ENCODE measurements at regions of chr4 and their contacts with region 1.

Region 1: DNA sequence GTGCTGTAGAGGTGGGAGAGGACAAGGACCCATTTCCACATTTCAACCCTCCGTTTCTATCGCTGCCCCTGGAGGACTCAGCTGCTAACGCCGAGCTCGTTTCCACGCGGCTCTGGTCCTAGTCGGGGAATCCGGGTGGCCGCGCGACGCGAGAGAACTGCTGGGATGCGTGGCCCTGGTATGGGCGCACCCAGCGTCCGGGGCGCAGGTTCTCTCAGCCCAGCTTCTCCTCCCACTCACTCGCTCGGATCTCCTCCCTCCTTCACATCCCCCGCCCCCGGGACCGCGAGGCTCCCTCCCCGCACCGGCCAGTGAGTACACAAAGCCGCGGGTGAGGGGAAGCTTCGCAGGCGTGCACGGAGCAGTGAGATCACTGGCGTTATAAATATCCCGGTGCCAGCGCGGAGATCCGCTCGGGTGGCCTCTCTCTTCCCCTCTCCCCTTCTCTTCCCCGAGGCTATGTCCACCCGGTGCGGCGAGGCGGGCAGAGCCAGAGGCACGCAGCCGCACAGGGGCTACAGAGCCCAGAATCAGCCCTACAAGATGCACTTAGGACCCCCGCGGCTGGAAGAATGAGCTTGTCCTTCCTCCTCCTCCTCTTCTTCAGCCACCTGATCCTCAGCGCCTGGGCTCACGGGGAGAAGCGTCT is at the start of gene FGF5:
- DNase-seq: peak; percentile 94
- ATAC-seq: peak; percentile 87
- H3K4me3 ChIP-seq: peak within 1 kb of the TSS; percentile 63
- H3K27ac ChIP-seq: peak within 1 kb of the TSS; percentile 87
- H3K4me1 ChIP-seq: peaks cover 7% of the 10 kb centered on the region
- H3K27me3 ChIP-seq: no peaks in the 10 kb centered on the region
- CTCF ChIP-seq: no peak
- POLR2A ChIP-seq: peak; percentile 93
- RAD21 ChIP-seq: no peak
- total RNA-seq, gene FGF5: 18.6 and 35.8 TPM in 2 replicates

Region 2: DNA sequence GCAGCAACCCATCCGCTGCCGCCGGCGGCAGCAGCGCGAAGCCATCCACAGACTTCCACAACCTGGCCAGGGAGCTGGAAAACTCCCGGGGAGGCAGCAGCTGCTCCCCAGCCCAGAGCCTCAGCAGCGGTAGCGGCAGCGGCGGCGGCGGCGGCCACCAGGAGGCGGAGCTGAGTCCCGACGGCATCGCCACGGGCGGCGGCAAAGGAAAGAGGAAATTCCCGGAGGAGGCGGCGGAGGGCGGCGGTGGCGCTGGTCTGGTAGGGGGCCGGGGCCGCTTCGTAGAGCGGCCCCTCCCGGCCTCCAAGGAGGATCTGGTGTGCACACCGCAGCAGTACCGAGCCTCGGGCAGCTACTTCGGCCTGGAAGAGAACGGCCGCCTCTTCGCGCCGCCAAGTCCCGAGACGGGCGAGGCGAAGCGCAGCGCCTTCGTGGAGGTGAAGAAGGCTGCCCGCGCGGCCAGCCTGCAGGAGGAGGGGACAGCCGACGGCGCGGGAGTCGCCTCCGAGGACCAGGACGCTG is 64.1 kb before region 1 on chr4:
- CTCF ChIA-PET with region 1: interaction called, 4 read pairs
- POLR2A ChIA-PET with region 1: interaction called, 3 read pairs
- dilution Hi-C with region 1: no loop called
- in situ Hi-C with region 1: no loop called
- intact Hi-C with region 1: loop called (anchors 5 kb)
- DNase-seq: peak; percentile 80
- ATAC-seq: peak; percentile 75
- H3K4me3 ChIP-seq: peak overlapping the region; percentile 66
- H3K27ac ChIP-seq: peak overlapping the region; percentile 89
- H3K4me1 ChIP-seq: peaks cover 2% of the 10 kb centered on the region; the same call in 1 of the 2 replicates
- H3K27me3 ChIP-seq: no peaks in the 10 kb centered on the region
- CTCF ChIP-seq: peak; percentile 76
- POLR2A ChIP-seq: no peak
- RAD21 ChIP-seq: peak; percentile 56

Region 3: DNA sequence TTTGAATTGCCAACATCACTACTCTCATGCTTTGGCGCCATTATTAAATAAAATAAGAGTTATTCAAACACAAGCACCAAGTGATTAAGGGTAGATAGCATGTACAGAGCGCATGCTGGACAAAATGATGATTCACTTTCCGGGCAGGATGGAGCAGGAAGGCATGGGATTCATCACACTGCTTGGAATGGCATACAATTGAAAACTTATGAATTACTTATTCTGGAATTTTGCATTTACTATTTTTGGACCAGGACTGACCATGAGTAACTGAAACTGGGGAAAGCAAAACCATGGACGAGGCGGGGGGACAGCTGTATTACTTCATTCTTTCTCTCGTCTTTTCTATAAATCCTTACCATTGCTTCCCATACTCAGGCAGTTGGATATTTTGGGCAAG is 28.4 kb before region 1 on chr4:
- CTCF ChIA-PET with region 1: interaction called, 8 read pairs
- POLR2A ChIA-PET with region 1: interaction called, 9 read pairs
- dilution Hi-C with region 1: no loop called
- in situ Hi-C with region 1: no loop called
- intact Hi-C with region 1: loop called (anchors 1 kb)
- DNase-seq: peak; percentile 96
- ATAC-seq: peak; percentile 83
- H3K4me3 ChIP-seq: peak overlapping the region; percentile 23; the same call in 1 of the 2 replicates
- H3K27ac ChIP-seq: peak overlapping the region; percentile 25; the same call in 1 of the 2 replicates
- H3K4me1 ChIP-seq: peaks cover 26% of the 10 kb centered on the region
- H3K27me3 ChIP-seq: no peaks in the 10 kb centered on the region
- CTCF ChIP-seq: no peak
- POLR2A ChIP-seq: no peak
- RAD21 ChIP-seq: no peak

Region 4: DNA sequence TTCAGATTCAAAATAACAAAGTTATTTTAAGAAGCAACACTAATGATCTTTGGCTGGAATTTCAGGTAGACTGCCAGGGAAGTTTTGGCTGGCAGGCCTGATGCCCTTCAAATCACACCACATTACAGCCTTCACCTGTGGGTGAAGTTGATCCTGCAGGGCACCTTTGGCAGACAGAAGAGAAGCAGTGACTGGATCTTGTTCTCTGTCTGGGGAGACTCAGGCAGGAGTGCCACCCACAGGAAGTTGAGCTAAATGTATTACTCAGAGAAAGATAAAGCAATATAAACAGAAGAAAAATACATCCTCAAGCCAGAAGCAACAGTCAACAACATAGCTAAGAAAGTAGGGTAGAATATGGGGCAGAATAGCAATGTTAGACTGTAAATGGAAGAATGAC is 56.3 kb after region 1 on chr4:
- CTCF ChIA-PET with region 1: interaction called, 8 read pairs
- POLR2A ChIA-PET with region 1: no interaction called
- dilution Hi-C with region 1: no loop called
- in situ Hi-C with region 1: no loop called
- intact Hi-C with region 1: loop called (anchors 5 kb)
- DNase-seq: peak; percentile 68
- ATAC-seq: peak; percentile 97
- H3K4me3 ChIP-seq: no peak overlapping the region
- H3K27ac ChIP-seq: no peak overlapping the region
- H3K4me1 ChIP-seq: peaks cover 5% of the 10 kb centered on the region
- H3K27me3 ChIP-seq: no peaks in the 10 kb centered on the region
- CTCF ChIP-seq: peak; percentile 69
- POLR2A ChIP-seq: no peak
- RAD21 ChIP-seq: peak; percentile 74